Activated CD4-positive, alpha-beta T cell treated with anti-CD3 and anti-CD28 coated beads, Interleukin-2, amount 10 ng/mL, durations not matched to agents 24 days and 14 days (primary cell): ENCODE measurements at regions of chr4 and their contacts with region 1.

Region 1: GRCh38 chr4:48340965-48341775 is at the start of gene SLAIN2:
- DNase-seq: peak; percentile 100
- H3K4me3 Mint-ChIP-seq: peak within 1 kb of the TSS; percentile 100
- H3K27ac Mint-ChIP-seq: peak within 1 kb of the TSS; percentile 98
- H3K4me1 Mint-ChIP-seq: peaks cover 55% of the 10 kb centered on the region
- H3K27me3 Mint-ChIP-seq: no peaks in the 10 kb centered on the region
- total RNA-seq, gene SLAIN2: 77.6 and 80.2 TPM in 2 replicates

Region 2: DNA sequence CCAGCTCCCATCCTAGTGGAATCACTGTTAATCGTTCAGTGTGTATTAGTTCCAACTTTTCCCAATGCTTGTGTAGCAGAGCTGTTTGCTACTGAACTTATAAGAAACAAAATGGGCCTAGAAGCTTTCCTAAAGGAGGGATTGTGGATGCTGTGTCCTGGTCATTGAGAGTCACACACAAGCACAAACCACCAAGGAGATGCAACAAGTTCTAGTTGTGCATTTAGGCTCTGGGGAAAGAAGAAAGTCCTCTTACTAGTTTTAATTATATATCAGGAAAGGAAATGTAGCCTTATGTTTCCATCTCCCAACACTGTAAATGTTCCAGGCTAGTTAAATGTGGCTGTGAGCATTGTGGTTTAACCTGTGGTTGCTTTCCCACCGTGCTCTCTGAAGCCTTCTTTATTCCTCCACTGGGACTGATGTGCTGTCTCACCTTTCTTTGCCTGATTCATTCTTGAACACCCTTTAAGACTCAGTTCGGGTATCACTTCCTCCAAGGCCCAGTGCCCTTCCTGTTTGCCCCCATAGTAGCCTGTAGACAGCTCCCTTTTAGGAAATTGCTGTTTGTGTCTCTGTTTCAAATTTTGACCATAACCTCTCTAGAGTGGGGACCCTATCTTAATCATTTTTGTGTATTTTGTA is 821.8 kb before region 1 on chr4:
- intact Hi-C with region 1: no loop called
- DNase-seq: no peak
- H3K4me3 Mint-ChIP-seq: no peak overlapping the region
- H3K27ac Mint-ChIP-seq: no peak overlapping the region
- H3K4me1 Mint-ChIP-seq: peaks cover 9% of the 10 kb centered on the region
- H3K27me3 Mint-ChIP-seq: no peaks in the 10 kb centered on the region

Region 3: DNA sequence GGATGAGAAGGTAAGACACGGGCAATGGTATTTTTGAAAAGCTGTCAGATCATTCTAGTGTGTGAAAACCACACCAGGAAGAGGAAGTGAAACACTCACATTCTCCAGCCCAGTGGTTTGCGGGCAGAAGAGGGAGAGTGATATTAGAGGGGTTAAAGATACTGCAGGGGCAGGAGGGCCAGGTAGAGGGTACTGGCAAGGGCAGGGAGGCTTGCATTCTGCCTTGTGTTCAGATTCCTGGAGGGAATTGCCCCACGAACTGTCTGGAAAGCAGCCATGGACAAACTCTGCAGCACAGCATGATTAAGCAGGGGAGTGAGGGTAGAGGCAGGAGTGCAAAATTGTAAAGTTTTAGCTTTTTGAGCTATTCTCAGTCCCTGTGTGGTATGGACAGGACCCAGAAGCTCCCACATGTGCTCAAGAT is 293.7 kb before region 1 on chr4:
- intact Hi-C with region 1: loop called (anchors 10 kb)
- DNase-seq: peak; percentile 89
- H3K4me3 Mint-ChIP-seq: peak overlapping the region; percentile 38
- H3K27ac Mint-ChIP-seq: peak overlapping the region; percentile 61
- H3K4me1 Mint-ChIP-seq: peaks cover 39% of the 10 kb centered on the region
- H3K27me3 Mint-ChIP-seq: peaks cover 62% of the 10 kb centered on the region

Region 4: GRCh38 chr4:48141048-48141447 is 200.1 kb before region 1 on chr4:
- intact Hi-C with region 1: no loop called
- DNase-seq: peak; percentile 48
- H3K4me3 Mint-ChIP-seq: no peak overlapping the region
- H3K27ac Mint-ChIP-seq: no peak overlapping the region
- H3K4me1 Mint-ChIP-seq: peaks cover 44% of the 10 kb centered on the region
- H3K27me3 Mint-ChIP-seq: no peaks in the 10 kb centered on the region

Region 5: GRCh38 chr4:48315728-48316630 is 25.2 kb before region 1 on chr4:
- intact Hi-C with region 1: loop called (anchors 1 kb)
- DNase-seq: peak; percentile 78
- H3K4me3 Mint-ChIP-seq: no peak overlapping the region
- H3K27ac Mint-ChIP-seq: no peak overlapping the region
- H3K4me1 Mint-ChIP-seq: peaks cover 2% of the 10 kb centered on the region
- H3K27me3 Mint-ChIP-seq: peaks cover 2% of the 10 kb centered on the region

Region 6: GRCh38 chr4:48403779-48404178 is 62.6 kb after region 1 on chr4:
- intact Hi-C with region 1: loop called (anchors 2 kb)
- DNase-seq: no peak
- H3K4me3 Mint-ChIP-seq: no peak overlapping the region
- H3K27ac Mint-ChIP-seq: no peak overlapping the region
- H3K4me1 Mint-ChIP-seq: peaks cover 20% of the 10 kb centered on the region
- H3K27me3 Mint-ChIP-seq: no peaks in the 10 kb centered on the region

Region 7: GRCh38 chr4:48906206-48907173 is 565.3 kb after region 1 on chr4 and contains the start of gene OCIAD2:
- intact Hi-C with region 1: loop called (anchors 10 kb)
- DNase-seq: peak; percentile 93
- H3K4me3 Mint-ChIP-seq: peak within 1 kb of the TSS; percentile 94
- H3K27ac Mint-ChIP-seq: peak within 1 kb of the TSS; percentile 90
- H3K4me1 Mint-ChIP-seq: peaks cover 39% of the 10 kb centered on the region
- H3K27me3 Mint-ChIP-seq: no peaks in the 10 kb centered on the region
- total RNA-seq, gene OCIAD2: 54.1 and 65.3 TPM in 2 replicates